ENCODE measurements at regions of chr16 and their contacts with region 1.

Region 1: DNA sequence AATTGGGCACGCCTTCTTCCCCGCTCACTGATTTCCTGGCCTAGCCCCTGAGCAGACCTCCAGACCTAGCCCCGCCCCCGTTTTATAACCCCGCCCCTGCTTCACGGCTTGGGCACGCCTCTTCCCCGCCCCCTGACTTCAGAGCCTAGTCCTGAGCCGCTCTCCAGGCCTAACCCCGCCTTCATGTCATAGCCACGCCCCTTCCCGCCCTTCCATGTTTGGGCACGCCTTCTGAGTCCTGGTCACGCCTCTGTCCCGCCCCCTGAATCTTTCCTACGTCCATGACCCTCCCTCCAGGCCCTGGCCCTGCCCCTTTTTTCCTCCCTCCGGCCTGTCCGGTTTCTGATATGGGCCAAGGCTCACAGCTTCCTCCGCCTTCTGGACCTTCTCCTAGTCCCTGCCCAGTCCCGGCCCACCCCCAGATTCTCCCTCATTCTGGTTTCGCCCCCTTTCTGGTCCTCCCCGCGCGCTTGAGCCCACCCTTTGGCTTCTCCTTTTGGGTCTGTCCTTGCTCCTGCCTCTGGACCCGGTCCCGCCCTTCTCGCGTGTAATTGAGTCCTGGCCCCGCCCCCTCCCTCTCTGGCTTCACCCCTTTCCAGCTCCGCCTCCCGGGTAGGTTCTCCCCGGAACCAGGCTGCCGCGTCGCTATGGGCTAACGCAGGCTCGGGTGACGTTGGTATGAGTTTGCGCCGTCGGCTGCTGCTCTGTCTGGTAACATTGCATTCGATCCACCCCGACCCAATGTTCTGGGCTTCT is 15.1 kb upstream of the EEF2K start:
- DNase-seq: peak; percentile 97
- H3K4me3 ChIP-seq: peak overlapping the region; percentile 21 to 80 (median 47)
- H3K27ac ChIP-seq: peak overlapping the region; percentile 99
- H3K4me1 ChIP-seq: peaks cover 45% of the 10 kb centered on the region
- H3K27me3 ChIP-seq: no peaks in the 10 kb centered on the region
- CTCF ChIP-seq: no peak
- POLR2A ChIP-seq: peak; percentile 28

Region 2: DNA sequence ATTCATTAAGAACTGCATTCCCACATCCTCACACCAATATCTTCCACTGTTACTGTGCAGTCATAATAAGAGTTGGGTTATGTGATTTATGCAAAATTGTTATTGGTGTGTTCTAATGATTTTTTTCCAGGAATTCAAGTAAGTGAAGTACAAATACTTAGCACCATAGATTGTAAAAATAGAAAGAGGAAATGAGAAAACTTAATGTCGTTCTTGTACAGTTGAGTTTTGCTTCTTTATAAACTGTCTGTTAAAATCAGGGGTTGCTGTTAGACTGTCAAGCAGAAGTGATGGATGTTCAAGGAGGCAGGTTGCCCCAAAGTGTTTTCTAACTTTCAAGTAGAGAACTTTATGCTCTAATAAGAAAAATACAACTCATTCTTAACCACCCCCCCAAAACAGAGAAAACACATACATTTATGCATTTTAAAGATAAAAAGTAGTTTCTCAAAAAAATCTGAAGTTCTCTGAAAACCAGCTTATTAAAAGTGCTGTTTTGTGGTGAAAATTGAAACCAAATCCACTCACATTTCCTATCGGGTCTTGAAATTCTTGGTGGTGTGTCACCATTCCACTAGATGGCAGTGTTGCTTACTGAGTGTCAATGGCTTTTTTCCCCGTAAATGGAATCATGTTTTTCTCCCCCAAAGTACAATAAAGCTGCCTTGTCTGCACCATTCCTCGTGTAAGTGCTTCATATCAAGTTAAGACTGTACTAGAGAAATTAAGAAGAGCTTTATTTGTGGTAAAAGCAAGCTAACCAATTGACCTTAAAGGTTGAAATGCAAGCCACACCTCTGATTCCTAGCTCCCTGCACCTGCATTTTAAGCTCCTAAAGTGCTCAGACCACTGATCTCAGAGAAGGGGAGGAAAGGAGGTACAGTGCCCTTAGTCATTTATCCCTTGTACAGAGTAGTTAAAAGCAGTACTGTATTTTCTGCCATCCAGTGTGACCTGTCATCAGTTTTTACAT is 533.9 kb before region 1 on chr16:
- CTCF ChIA-PET with region 1: interaction called, 21 read pairs
- POLR2A ChIA-PET with region 1: no interaction called
- dilution Hi-C with region 1: no loop called
- intact Hi-C with region 1: no loop called
- DNase-seq: peak; percentile 63
- H3K4me3 ChIP-seq: no peak overlapping the region
- H3K27ac ChIP-seq: no peak overlapping the region
- H3K4me1 ChIP-seq: peaks cover 6% of the 10 kb centered on the region
- H3K27me3 ChIP-seq: no peaks in the 10 kb centered on the region
- CTCF ChIP-seq: peak; percentile 69 to 71
- POLR2A ChIP-seq: no peak

Region 3: DNA sequence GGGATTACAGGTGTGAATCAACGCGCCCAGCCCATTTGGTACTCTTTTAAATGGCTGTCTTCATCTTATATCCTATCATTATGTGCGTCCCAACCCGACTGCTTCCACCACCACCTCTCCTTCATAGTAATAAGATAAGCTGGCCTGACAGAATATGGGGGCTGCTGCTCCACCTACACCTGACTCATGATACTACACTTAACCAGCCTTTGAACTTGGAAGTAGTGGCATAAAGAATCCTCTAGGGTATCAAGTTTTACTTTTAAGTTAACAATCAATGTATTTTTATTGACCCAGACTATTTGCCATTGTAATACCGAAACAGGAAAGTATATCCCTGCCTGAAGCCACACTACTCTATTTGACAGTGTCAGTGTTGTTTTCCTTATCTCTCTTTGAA is 208.8 kb before region 1 on chr16:
- CTCF ChIA-PET with region 1: interaction called, 13 read pairs
- POLR2A ChIA-PET with region 1: no interaction called
- dilution Hi-C with region 1: no loop called
- intact Hi-C with region 1: no loop called
- DNase-seq: no peak
- H3K4me3 ChIP-seq: no peak overlapping the region
- H3K27ac ChIP-seq: no peak overlapping the region
- H3K4me1 ChIP-seq: no peaks in the 10 kb centered on the region
- H3K27me3 ChIP-seq: no peaks in the 10 kb centered on the region
- CTCF ChIP-seq: no peak
- POLR2A ChIP-seq: no peak

Region 4: GRCh38 chr16:22007509-22008214 is 183.3 kb before region 1 on chr16 and contains the start of gene MOSMO:
- CTCF ChIA-PET with region 1: interaction called, 99 read pairs
- POLR2A ChIA-PET with region 1: interaction called, 6 read pairs
- dilution Hi-C with region 1: no loop called
- intact Hi-C with region 1: no loop called
- DNase-seq: peak; percentile 72
- H3K4me3 ChIP-seq: peak within 1 kb of the TSS; percentile 63 to 86 (median 76)
- H3K27ac ChIP-seq: peak within 1 kb of the TSS; percentile 56
- H3K4me1 ChIP-seq: peaks cover 20% of the 10 kb centered on the region
- H3K27me3 ChIP-seq: no peaks in the 10 kb centered on the region
- CTCF ChIP-seq: peak in 1 of 2 donors; percentile 9
- POLR2A ChIP-seq: peak; percentile 58
- total RNA-seq, gene MOSMO: 22.0 and 23.2 TPM in 2 replicates

Region 5: DNA sequence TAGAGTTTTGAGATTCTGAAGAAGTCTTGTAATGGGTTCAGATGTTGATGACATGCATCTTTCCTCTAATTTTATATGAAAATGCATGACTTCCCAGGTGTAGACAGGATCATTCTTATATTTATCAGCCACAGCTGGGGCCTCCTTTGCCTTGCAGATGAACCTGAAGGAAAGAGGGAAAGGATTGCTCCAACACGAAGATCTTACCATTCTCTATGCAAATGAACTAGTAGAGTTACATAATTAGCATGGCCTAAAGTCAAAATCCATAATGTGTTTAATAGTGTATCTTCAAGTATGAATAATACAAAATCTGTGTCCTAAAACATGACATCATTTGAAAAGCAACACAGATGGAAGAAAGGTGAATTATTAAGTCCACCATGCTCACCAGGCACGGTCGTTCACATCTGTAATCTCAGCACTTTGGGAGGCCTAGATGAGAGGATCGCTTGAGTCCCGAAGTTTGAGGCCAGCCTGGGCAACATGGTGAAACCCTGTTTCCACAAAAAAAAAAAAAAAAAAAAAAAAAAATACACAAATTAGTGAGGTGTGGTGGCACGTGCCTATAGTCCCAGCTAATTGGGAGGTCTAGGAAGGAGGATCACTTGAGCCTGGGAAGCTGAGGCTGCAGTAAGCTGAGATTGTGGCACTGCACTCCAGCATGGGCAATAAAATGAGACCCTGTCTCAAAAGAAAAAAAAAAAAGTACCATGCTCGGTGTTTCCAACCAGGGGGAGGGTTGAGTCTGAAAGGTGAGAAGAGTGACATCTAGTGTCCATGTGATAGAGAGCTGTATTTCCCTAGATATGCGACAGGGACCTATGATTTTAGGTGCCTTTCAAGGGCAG is 92.3 kb before region 1 on chr16:
- CTCF ChIA-PET with region 1: interaction called, 36 read pairs
- POLR2A ChIA-PET with region 1: no interaction called
- dilution Hi-C with region 1: no loop called
- intact Hi-C with region 1: loop called (anchors 1 kb)
- DNase-seq: peak; percentile 55
- H3K4me3 ChIP-seq: no peak overlapping the region
- H3K27ac ChIP-seq: no peak overlapping the region
- H3K4me1 ChIP-seq: no peaks in the 10 kb centered on the region
- H3K27me3 ChIP-seq: peaks cover 0 to 2% of the 10 kb centered on the region in 2 experiments
- CTCF ChIP-seq: peak; percentile 53 to 65
- POLR2A ChIP-seq: no peak

Region 6: GRCh38 chr16:22132766-22133165 is 58.2 kb before region 1 on chr16:
- CTCF ChIA-PET with region 1: no interaction called
- POLR2A ChIA-PET with region 1: no interaction called
- dilution Hi-C with region 1: no loop called
- intact Hi-C with region 1: no loop called
- DNase-seq: no peak
- H3K4me3 ChIP-seq: no peak overlapping the region
- H3K27ac ChIP-seq: no peak overlapping the region
- H3K4me1 ChIP-seq: no peaks in the 10 kb centered on the region
- H3K27me3 ChIP-seq: peaks cover 0 to 3% of the 10 kb centered on the region in 2 experiments
- CTCF ChIP-seq: no peak
- POLR2A ChIP-seq: no peak

Region 7: DNA sequence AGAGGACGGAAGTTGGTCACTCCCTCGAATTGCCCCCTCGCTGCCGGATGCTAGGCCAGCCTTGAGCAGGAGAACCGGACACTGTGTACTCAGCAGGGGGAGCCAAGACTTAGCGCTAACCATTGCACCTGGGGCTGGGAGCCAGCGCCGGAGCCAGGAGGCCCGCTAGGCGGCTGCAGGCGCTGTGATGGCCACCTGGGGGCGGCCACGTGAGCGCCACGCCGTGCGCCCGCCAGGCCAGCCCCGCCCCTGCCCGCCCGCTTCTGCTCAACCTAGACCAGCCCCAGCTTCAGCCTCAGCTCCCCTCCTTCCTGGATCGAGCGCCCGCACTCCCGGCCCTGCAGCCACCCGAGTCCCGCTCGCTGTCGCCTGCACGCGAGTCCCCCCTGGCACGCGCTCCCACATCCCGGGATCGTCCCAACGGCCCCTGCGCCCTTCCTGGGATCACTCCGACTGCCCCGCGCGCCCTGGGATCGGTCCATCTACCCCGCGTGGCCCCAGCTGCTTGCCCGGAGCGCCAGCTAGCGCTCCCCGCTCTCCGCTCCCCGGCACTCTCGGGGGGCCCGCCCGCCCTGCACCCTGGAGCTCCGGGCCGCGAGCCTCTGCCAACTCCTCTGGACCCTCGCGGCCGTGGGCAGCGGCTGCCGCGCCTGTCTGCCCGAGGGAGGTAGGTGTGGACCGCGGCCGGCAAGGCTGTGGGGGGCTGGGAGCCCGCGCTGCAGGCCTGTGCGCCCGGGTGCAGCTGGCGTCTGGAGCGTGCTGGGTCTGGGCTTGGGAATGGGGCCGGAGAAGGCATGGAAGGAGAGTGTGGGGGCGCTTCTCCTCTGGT is 15.3 kb after region 1 on chr16 and contains the start of gene EEF2K:
- CTCF ChIA-PET with region 1: interaction called, 16 read pairs
- POLR2A ChIA-PET with region 1: interaction called, 8 read pairs
- dilution Hi-C with region 1: no loop called
- intact Hi-C with region 1: loop called (anchors 1 kb)
- DNase-seq: peak; percentile 95
- H3K4me3 ChIP-seq: peak within 1 kb of the TSS; percentile 70 to 88 (median 79)
- H3K27ac ChIP-seq: peak within 1 kb of the TSS; percentile 85
- H3K4me1 ChIP-seq: peaks cover 16% of the 10 kb centered on the region
- H3K27me3 ChIP-seq: no peaks in the 10 kb centered on the region
- CTCF ChIP-seq: peak; percentile 66 to 81
- POLR2A ChIP-seq: peak; percentile 68
- total RNA-seq, gene EEF2K: 44.1 and 48.6 TPM in 2 replicates

Region 8: GRCh38 chr16:22397464-22397863 is 206.5 kb after region 1 on chr16:
- CTCF ChIA-PET with region 1: no interaction called
- POLR2A ChIA-PET with region 1: no interaction called
- dilution Hi-C with region 1: no loop called
- intact Hi-C with region 1: no loop called
- DNase-seq: no peak
- H3K4me3 ChIP-seq: no peak overlapping the region
- H3K27ac ChIP-seq: no peak overlapping the region
- H3K4me1 ChIP-seq: peaks cover 13% of the 10 kb centered on the region
- H3K27me3 ChIP-seq: no peaks in the 10 kb centered on the region
- CTCF ChIP-seq: no peak
- POLR2A ChIP-seq: no peak

Measured in endothelial cell of umbilical vein (primary cell).